H1 (cell line): ENCODE measurements at regions of chr10 and their contacts with region 1.

Region 1: GRCh38 chr10:101536800-101537199 is 51.3 kb downstream of the POLL start:
- DNase-seq: no peak
- H3K4me3 ChIP-seq: no peak overlapping the region
- H3K27ac ChIP-seq: no peak overlapping the region
- H3K4me1 ChIP-seq: no peaks in the 10 kb centered on the region
- H3K27me3 ChIP-seq: no peaks in the 10 kb centered on the region
- CTCF ChIP-seq: peak in 2 of 3 experiments; percentile 38 to 60; a peak in 2 of 4 replicates
- EP300 ChIP-seq: no peak
- POLR2A ChIP-seq: no peak
- RAD21 ChIP-seq: peak in 1 of 2 experiments; percentile 22; a peak in 1 of 4 replicates

Region 2: GRCh38 chr10:101458869-101459268 is 77.9 kb before region 1 on chr10:
- CTCF ChIA-PET with region 1: no interaction called
- POLR2A ChIA-PET with region 1: no interaction called
- DNase-seq: no peak
- H3K4me3 ChIP-seq: no peak overlapping the region
- H3K27ac ChIP-seq: no peak overlapping the region
- H3K4me1 ChIP-seq: no peaks in the 10 kb centered on the region
- H3K27me3 ChIP-seq: no peaks in the 10 kb centered on the region
- CTCF ChIP-seq: no peak
- EP300 ChIP-seq: no peak
- POLR2A ChIP-seq: no peak
- RAD21 ChIP-seq: no peak

Region 3: DNA sequence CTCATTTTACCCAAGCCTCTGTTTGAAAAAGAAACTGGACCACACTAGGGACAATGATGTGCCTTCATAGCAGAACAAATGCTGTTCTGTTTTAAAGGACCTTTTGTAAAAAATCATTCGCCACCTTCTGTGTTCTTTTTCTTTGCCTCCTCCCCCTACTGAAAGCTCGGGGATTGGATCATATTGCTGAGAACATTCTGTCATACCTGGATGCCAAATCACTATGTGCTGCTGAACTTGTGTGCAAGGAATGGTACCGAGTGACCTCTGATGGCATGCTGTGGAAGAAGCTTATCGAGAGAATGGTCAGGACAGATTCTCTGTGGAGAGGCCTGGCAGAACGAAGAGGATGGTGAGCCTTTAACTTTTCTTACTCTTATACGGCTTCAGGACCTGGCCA is 11.0 kb before region 1 on chr10:
- CTCF ChIA-PET with region 1: interaction called, 17 read pairs
- POLR2A ChIA-PET with region 1: interaction called, 3 read pairs
- DNase-seq: no peak
- H3K4me3 ChIP-seq: no peak overlapping the region
- H3K27ac ChIP-seq: no peak overlapping the region
- H3K4me1 ChIP-seq: peaks cover 0 to 6% (median 3%) of the 10 kb centered on the region in 4 experiments; a peak in 3 of 7 replicates
- H3K27me3 ChIP-seq: no peaks in the 10 kb centered on the region
- CTCF ChIP-seq: no peak
- EP300 ChIP-seq: no peak
- POLR2A ChIP-seq: no peak
- RAD21 ChIP-seq: no peak

Region 4: DNA sequence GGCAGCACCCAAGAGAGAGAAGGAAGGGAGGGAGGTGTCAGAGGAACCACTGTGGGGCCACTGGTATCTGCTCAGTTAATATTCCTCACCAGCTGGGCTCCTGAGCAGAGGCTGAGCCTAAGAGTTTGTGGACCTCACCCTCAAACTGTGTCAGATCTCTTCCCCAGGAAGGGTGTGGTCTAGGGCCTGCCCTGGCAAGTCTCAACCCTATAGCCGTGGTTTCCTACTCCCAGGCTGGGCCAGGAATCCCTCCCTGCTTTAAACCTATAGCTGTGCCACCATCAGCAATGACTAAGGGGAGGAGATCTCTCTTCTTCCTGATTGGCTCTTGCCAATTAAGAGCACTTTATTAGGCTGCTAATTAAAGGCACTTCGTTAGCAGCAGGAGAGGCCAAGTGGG is 21.4 kb after region 1 on chr10:
- CTCF ChIA-PET with region 1: interaction called, 15 read pairs
- POLR2A ChIA-PET with region 1: no interaction called
- DNase-seq: no peak
- H3K4me3 ChIP-seq: no peak overlapping the region
- H3K27ac ChIP-seq: no peak overlapping the region
- H3K4me1 ChIP-seq: peaks cover 0 to 2% (median 0%) of the 10 kb centered on the region in 4 experiments; a peak in 2 of 7 replicates
- H3K27me3 ChIP-seq: no peaks in the 10 kb centered on the region
- CTCF ChIP-seq: no peak
- EP300 ChIP-seq: no peak
- POLR2A ChIP-seq: no peak
- RAD21 ChIP-seq: no peak

Region 5: DNA sequence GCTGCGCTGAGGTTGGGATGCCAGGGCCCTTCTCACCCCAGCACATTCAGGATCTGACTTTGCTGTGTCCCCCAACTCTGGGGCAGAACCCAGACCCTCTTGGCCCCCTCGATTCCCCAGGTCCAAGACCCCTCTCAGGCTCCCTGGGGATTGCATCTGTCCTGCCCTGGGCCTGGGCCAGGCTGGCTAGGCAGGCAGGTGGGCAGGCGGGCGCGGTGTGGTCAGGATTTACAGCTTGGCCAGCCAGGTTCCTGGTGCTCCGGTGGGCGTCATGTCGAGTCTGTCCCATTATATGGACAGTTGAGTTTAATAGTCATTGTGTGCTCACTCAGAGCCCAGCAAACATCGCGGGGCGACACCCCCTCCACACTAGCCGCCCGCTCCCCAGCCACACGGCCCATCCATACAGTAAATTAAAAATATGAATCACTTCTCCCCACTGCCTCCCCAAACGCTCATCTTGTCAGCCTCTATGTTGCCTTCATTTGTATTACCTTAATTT is 27.7 kb after region 1 on chr10:
- CTCF ChIA-PET with region 1: interaction called, 60 read pairs
- POLR2A ChIA-PET with region 1: interaction called, 3 read pairs
- DNase-seq: no peak
- H3K4me3 ChIP-seq: no peak overlapping the region
- H3K27ac ChIP-seq: no peak overlapping the region
- H3K4me1 ChIP-seq: peaks cover 0 to 10% (median 6%) of the 10 kb centered on the region in 4 experiments; a peak in 4 of 7 replicates
- H3K27me3 ChIP-seq: peaks cover 2 to 37% (median 33%) of the 10 kb centered on the region in 4 experiments
- CTCF ChIP-seq: no peak
- EP300 ChIP-seq: no peak
- POLR2A ChIP-seq: no peak
- RAD21 ChIP-seq: no peak